ENCODE measurements at regions of chr6 and their contacts with region 1.

Region 1: DNA sequence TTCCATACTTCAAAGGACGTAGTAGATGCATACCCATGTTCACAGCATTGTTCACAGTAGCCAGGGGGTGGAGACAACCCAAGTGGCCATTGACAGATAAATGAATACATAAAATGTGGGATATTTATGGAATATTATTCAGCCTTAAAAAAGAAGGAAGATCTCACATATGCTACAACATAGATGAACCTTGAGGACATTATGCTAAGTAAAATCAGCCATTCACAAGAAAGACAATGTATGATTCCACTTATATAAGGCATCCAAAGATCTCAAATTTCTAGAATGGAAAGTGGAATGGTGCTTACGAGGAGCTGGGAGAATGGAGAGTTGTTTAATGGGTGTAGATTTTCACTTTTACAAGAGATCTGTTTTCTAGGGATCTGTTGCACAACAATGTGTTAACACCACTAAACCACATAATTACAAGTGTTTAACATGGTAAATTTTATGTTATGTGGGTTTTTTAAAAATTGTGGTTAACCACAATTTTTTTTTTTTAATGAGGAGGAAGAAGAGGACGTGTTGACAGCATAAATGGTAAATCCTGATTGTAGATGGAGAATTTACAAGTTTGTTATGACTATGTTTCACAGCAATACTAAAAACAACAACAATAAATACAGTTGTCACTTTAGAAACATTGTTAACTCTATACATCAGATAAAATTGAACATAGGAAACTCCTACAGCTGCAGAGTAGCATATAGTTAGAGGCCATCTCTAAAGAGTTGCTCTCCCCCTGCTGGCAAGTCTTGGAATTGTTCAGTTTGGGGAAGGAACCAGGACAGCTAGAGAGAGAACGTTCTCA is 41.6 kb downstream of the CCN2 start:
- DNase-seq: peak in 1 of 2 donors; percentile 48
- ATAC-seq: peak; percentile 59 to 85 (median 71)
- H3K4me3 ChIP-seq: no peak overlapping the region
- H3K27ac ChIP-seq: no peak overlapping the region
- H3K4me1 ChIP-seq: no peaks in the 10 kb centered on the region
- H3K27me3 ChIP-seq: peaks cover 0 to 6% (median 4%) of the 10 kb centered on the region in 3 donors
- CTCF ChIP-seq: peak; percentile 89

Region 2: DNA sequence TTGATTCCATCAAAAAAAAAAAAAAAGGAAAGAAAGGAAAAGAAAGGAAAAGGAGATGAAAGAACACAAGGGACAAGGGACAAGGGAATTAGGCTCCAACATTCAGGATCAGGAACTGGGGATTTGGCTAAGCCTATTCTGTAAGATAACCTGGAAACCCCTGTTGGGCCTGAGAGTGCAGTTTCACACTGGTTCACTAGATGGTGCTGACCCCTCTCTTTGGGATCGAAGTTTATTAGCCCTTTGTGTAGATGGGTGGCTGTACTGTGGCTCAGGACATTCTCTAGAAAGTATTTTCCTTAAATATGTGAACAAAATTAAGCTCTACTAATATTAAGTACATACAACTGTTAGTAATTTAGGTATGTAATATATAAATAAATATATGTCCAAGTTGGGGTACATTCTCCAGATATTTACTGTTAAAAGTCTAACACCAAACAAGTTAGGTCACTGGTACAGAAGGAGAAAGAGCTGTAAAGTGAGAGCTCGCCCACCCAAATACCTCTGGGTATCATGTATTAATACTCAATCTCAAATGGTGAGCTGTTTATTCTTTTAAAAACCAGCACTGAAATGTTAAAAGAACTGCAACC is 214.7 kb before region 1 on chr6:
- intact Hi-C with region 1: loop called (anchors 2 to 5 kb)
- DNase-seq: peak in 1 of 2 donors; percentile 21
- ATAC-seq: peak; percentile 58 to 93 (median 87)
- H3K4me3 ChIP-seq: no peak overlapping the region
- H3K27ac ChIP-seq: no peak overlapping the region
- H3K4me1 ChIP-seq: no peaks in the 10 kb centered on the region
- H3K27me3 ChIP-seq: no peaks in the 10 kb centered on the region
- CTCF ChIP-seq: peak; percentile 75

Region 3: DNA sequence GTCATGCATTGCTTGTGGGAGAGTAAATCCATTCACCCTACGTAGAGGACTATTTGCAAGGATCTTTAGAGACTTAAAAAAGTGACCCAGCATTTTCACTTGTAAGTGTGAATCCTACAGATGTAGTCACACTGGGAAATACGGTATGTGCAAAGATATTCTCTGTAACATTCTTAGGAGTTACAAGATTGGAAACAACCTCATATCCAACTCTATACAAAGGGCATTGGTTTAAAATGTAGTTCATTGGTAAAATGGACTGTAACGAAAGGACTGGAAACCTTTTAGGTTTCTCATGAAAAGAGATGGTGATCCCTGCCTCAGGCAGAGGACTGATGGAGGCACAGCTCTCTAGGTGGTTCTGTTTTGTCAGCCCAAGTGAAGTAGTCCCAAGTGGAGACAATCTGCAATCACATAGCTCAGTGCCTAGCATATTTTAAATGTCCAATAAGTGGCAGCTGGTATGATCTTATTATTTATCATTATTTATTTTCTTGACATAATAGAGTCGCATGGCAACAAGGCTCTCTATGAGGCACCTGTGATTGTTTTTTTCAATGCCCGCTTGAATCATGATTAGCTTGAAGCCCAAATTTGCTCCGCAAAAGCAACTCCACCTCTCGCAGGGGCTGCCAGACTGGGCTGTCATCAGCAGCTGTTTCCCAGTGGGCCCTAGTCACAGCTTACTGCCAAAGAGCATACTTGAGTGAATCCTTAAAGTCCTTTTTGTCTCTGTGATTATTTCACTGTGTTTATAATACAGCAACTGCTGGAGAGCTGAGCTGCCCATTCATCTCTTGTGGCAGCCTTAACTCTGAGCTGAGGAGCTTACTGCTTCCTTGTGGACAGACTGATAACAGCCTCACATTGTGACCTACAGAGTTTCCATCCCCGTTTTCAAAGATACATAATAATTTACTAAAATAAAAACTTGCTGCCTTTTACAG is 121.6 kb before region 1 on chr6:
- intact Hi-C with region 1: loop called in 1 of 2 experiments (anchors 5 kb)
- DNase-seq: peak; percentile 41 to 74
- ATAC-seq: peak in 3 of 4 donors; percentile 53 to 59 (median 59)
- H3K4me3 ChIP-seq: no peak overlapping the region
- H3K27ac ChIP-seq: no peak overlapping the region
- H3K4me1 ChIP-seq: no peaks in the 10 kb centered on the region
- H3K27me3 ChIP-seq: no peaks in the 10 kb centered on the region
- CTCF ChIP-seq: no peak

Measured in psoas muscle (tissue), 8 donors.